ENCODE measurements at regions of chr1 and their contacts with region 1.

Region 1: GRCh38 chr1:224668984-224669383 is 52.9 kb downstream of the CNIH3 start:
- DNase-seq: peak; percentile 30 to 44
- H3K4me3 ChIP-seq: no peak overlapping the region
- H3K27ac ChIP-seq: no peak overlapping the region
- H3K4me1 ChIP-seq: no peaks in the 10 kb centered on the region
- H3K27me3 ChIP-seq: no peaks in the 10 kb centered on the region
- CTCF ChIP-seq: no peak

Region 2: GRCh38 chr1:224656392-224656791 is 12.6 kb before region 1 on chr1:
- CTCF ChIA-PET with region 1: no interaction called
- POLR2A ChIA-PET with region 1: interaction called, 13 read pairs
- intact Hi-C with region 1: no loop called
- DNase-seq: no peak
- H3K4me3 ChIP-seq: no peak overlapping the region
- H3K27ac ChIP-seq: no peak overlapping the region
- H3K4me1 ChIP-seq: peaks cover 18% of the 10 kb centered on the region
- H3K27me3 ChIP-seq: no peaks in the 10 kb centered on the region
- CTCF ChIP-seq: no peak

Region 3: DNA sequence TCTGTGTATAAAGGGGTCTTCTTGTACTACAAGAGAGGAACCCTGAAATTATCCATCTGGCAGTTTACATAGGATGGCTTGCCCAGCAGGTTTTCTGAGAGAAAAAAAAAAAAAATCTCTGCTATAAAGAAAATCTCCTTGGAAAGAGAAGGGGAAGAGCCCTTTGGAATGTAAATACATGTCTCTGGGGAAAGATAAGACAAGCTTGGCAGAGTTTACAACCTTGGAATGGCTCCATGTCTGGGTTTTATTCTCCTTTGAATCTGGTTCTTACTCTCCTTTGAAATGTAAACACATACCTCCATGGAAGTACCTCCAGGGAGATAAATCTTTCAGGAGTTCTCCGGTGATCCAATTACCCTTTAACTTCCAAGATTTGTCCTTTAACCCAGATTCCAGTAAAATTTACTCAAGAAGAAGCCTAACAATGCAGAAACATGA is 215.4 kb after region 1 on chr1:
- CTCF ChIA-PET with region 1: no interaction called
- POLR2A ChIA-PET with region 1: no interaction called
- intact Hi-C with region 1: no loop called
- DNase-seq: no peak
- H3K4me3 ChIP-seq: no peak overlapping the region
- H3K27ac ChIP-seq: no peak overlapping the region
- H3K4me1 ChIP-seq: 0 out of 2 replicates have a peak, but pooled peaks cover 8% of the 10 kb centered on the region
- H3K27me3 ChIP-seq: peaks cover under 1% of the 10 kb centered on the region
- CTCF ChIP-seq: no peak

Measured in PC-9 (cell line).